Activated CD4-positive, alpha-beta T cell treated with anti-CD3 and anti-CD28 coated beads for 36 hours (primary cell): ENCODE measurements at regions of chr2 and their contacts with region 1.

Region 1: DNA sequence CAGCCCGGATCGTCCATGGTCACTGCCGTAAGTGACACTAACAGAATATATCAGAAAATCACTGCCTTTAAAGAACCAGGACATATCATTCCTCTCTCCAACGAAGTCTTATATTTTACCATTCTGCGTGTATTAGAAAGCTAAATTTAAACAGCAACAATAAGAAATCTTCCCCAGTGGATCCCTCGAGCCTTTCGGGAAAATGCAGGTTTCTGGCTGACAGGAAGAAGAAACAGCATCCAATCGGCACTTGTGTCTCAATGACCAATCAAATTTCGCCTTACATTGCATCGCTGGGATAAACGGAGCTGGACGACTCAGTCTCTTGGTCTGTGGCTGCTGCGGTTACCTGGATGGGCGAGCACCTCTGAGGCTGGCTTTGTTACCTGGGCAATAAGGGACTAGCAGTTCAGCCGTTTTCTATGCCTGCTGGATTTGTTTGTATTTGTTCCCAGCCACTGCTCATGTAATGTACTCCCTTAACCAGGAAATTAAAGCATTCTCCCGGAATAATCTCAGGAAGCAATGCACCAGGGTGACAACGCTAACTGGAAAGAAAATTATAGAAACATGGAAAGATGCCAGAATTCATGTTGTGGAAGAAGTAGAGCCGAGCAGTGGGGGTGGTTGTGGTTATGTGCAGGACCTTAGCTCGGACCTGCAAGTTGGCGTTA is at the start of gene DUSP19:
- DNase-seq: peak; percentile 89
- ATAC-seq: peak; percentile 94
- H3K4me3 Mint-ChIP-seq: peak within 1 kb of the TSS; percentile 84
- H3K27ac Mint-ChIP-seq: peak within 1 kb of the TSS; percentile 76
- H3K4me1 Mint-ChIP-seq: peaks cover 7% of the 10 kb centered on the region
- H3K27me3 Mint-ChIP-seq: no peaks in the 10 kb centered on the region
- total RNA-seq, gene DUSP19: 4.0 to 4.2 TPM

Region 2: GRCh38 chr2:183124222-183124956 is 45.8 kb after region 1 on chr2 and contains the start of gene NUP35:
- CTCF ChIA-PET with region 1: interaction called, 4 read pairs
- POLR2A ChIA-PET with region 1: interaction called, 7 read pairs
- intact Hi-C with region 1: loop called (anchors 1 kb)
- DNase-seq: peak; percentile 89
- ATAC-seq: peak; percentile 94
- H3K4me3 Mint-ChIP-seq: peak within 1 kb of the TSS; percentile 96
- H3K27ac Mint-ChIP-seq: peak within 1 kb of the TSS; percentile 97
- H3K4me1 Mint-ChIP-seq: peaks cover 25% of the 10 kb centered on the region
- H3K27me3 Mint-ChIP-seq: peaks cover 7% of the 10 kb centered on the region
- total RNA-seq, gene NUP35: 36.0 to 50.5 TPM